CD8-positive, alpha-beta T cell (primary cell): ENCODE measurements at regions of chr1 and their contacts with region 1.

Region 1: DNA sequence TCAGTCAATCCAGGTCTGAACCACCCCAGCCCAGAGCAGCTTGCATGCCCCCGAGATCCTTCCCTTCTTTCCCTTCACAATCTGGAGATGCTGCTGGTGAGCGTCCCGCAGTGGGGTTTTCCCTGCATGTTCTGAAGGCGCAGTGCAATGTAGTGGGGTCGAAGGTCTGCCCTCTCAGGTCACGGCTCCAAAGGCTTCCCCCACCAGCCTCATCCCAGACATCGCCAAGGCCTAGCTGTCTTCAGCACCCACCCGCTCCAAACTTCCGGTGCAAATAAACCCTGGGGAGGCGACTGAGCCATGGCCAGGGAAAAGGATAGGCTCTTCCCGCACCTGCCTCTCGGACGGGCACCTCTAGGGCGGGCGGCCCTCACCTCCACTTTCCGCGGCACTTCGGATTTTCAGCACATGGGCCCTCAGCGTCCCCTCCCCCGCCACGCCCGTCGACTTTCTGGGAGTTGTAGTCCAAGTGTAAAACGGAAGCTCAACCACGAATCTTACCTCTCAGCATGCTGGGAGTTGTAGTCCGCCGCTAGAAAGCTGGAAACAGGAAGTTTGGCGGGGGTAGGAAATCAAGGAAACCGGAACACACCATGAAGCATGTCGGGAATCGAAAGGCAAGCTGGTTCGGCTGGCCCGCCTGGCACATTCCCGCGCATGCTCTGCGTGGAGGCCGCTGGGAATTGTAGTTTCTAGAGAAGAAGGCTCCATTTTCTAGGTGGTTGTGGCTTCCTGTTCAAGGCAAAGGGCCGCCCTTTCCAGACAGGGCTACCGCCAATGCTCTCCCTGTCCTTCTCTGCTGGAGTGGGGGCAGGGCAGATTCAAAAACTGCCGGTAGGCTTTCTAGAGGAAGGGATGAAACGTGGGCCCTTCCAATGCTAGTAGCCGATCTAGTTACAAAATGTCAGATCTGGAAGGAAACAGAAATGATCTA is at the start of gene MRPL24:
- DNase-seq: peak; percentile 88 to 100 (median 96)
- ATAC-seq: peak; percentile 88
- H3K4me3 ChIP-seq: peak within 1 kb of the TSS; percentile 60 to 68
- H3K4me3 Mint-ChIP-seq: peak within 1 kb of the TSS; percentile 97
- H3K27ac ChIP-seq: peak within 1 kb of the TSS; percentile 55 to 81
- H3K27ac Mint-ChIP-seq: peak within 1 kb of the TSS; percentile 98
- H3K4me1 ChIP-seq: peaks cover 13% of the 10 kb centered on the region
- H3K4me1 Mint-ChIP-seq: peaks cover 38% of the 10 kb centered on the region
- H3K27me3 ChIP-seq: no peaks in the 10 kb centered on the region
- H3K27me3 Mint-ChIP-seq: no peaks in the 10 kb centered on the region
- CTCF ChIP-seq: no peak
- total RNA-seq, gene MRPL24: 9.1 to 12.5 TPM

Region 2: DNA sequence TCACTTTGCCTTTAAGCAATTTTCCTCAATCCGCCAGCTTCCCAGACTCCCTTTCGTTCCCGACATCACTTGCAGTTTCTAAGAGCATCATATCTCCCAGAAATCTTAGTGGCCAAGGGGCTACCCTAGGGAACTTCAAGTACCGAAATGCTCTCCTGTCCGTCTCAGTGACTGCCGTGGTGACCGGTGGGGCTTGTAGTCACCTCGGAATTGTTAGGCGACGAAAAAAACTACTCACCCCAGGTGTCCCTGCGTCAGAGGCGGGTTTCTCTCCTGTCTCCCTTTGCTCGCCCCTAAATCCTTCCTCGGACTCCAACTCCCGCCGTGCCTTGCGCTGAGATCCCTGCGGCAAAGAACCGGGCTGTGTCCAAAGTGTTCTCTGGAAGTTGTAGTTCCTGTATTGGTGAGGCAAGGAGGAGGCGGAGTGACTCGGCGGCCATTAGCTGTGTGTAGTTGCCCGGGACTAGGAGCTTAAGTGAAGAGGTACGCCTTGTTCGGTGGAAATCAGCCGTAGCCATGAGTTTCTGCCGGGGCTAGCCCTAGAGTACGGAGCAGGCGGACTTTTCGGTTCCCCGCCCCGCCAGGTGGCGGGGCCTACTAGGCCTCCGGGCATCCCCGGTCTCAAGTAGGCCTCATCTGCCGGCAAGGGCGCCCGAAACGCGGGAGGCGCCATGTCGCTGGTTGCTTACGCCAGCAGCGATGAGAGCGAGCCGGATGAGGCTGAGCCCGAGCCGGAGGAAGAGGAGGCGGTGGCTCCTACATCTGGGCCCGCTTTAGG is 26.3 kb after region 1 on chr1 and contains the start of gene PRCC:
- CTCF ChIA-PET with region 1: interaction called, 8 read pairs
- POLR2A ChIA-PET with region 1: interaction called, 33 read pairs
- intact Hi-C with region 1: loop called (anchors 1 kb)
- DNase-seq: peak; percentile 93 to 100 (median 97)
- ATAC-seq: peak; percentile 90
- H3K4me3 ChIP-seq: peak within 1 kb of the TSS; percentile 66 to 69
- H3K4me3 Mint-ChIP-seq: no peak within 1 kb of the TSS
- H3K27ac ChIP-seq: peak within 1 kb of the TSS; percentile 87 to 90
- H3K27ac Mint-ChIP-seq: no peak within 1 kb of the TSS
- H3K4me1 ChIP-seq: peaks cover 29% of the 10 kb centered on the region
- H3K4me1 Mint-ChIP-seq: peaks cover 41% of the 10 kb centered on the region
- H3K27me3 ChIP-seq: no peaks in the 10 kb centered on the region
- H3K27me3 Mint-ChIP-seq: no peaks in the 10 kb centered on the region
- CTCF ChIP-seq: no peak
- total RNA-seq, gene PRCC: 55.6 to 58.4 TPM